Colonic mucosa (tissue), 4 donors: ENCODE measurements at regions of chr12 and their contacts with region 1.

Region 1: GRCh38 chr12:366820-367219 is 22.3 kb downstream of the KDM5A start:
- DNase-seq: no peak
- H3K4me3 ChIP-seq: no peak overlapping the region
- H3K27ac ChIP-seq: no peak overlapping the region
- H3K4me1 ChIP-seq: no peaks in the 10 kb centered on the region
- H3K27me3 ChIP-seq: no peaks in the 10 kb centered on the region
- CTCF ChIP-seq: no peak

Region 2: DNA sequence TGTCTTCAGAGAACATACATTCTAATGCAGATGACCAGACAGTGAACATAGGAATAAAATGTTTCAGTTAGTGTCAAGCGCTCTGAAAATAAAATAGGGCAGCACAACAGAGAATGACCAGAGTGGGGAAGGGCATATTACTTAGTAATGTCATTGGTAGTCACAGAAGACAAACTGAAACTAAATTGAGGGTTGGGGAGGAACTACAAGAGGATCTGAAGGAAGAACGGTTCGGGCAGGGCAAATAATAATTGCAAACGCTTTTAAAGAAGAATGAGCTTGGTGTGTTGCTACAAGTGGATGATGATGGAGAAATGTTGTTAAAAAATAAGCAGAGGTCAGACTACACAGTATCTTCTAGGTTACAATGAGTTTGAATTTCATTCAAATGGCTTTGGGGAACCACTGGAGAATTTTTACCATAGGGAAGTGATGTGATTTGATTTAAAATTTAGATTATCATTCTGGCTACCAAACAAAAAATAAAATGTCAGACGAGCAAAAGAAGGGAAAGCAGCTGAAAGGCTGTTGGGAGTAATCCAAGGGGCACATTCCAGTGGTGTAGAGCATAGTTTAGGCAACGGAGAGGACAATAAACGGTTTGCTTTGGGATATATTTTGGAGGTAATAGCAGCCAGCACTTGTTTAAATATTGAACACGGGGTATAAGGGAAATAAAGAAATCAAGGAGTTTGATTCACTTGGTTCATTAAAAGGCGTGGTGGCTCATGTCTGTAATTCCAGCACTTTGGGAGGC is 47.9 kb before region 1 on chr12:
- intact Hi-C with region 1: loop called (anchors 10 kb)
- DNase-seq: no peak
- H3K4me3 ChIP-seq: no peak overlapping the region
- H3K27ac ChIP-seq: no peak overlapping the region
- H3K4me1 ChIP-seq: no peaks in the 10 kb centered on the region
- H3K27me3 ChIP-seq: no peaks in the 10 kb centered on the region
- CTCF ChIP-seq: no peak

Region 3: GRCh38 chr12:546921-547845 is 180.4 kb after region 1 on chr12:
- intact Hi-C with region 1: no loop called
- DNase-seq: peak; percentile 73
- H3K4me3 ChIP-seq: no peak overlapping the region
- H3K27ac ChIP-seq: no peak overlapping the region
- H3K4me1 ChIP-seq: no peaks in the 10 kb centered on the region
- H3K27me3 ChIP-seq: no peaks in the 10 kb centered on the region
- CTCF ChIP-seq: peak; percentile 99

Region 4: GRCh38 chr12:591167-592023 is 224.6 kb after region 1 on chr12:
- intact Hi-C with region 1: no loop called
- DNase-seq: no peak
- H3K4me3 ChIP-seq: no peak overlapping the region
- H3K27ac ChIP-seq: no peak overlapping the region
- H3K4me1 ChIP-seq: no peaks in the 10 kb centered on the region
- H3K27me3 ChIP-seq: no peaks in the 10 kb centered on the region
- CTCF ChIP-seq: no peak